CD8-positive, alpha-beta T cell (primary cell): ENCODE measurements at regions of chr5 and their contacts with region 1.

Region 1: GRCh38 chr5:50744776-50745175 is 78.3 kb downstream of the PARP8 start:
- DNase-seq: peak in 2 of 9 experiments; percentile 36 to 61
- ATAC-seq: peak; percentile 65
- H3K4me3 ChIP-seq: peak overlapping the region; percentile 31 to 44
- H3K4me3 Mint-ChIP-seq: peak overlapping the region; percentile 81
- H3K27ac ChIP-seq: peak overlapping the region; percentile 17 to 71
- H3K27ac Mint-ChIP-seq: peak overlapping the region; percentile 91
- H3K4me1 ChIP-seq: peaks cover 61% of the 10 kb centered on the region
- H3K4me1 Mint-ChIP-seq: peaks cover 76% of the 10 kb centered on the region
- H3K27me3 ChIP-seq: no peaks in the 10 kb centered on the region
- H3K27me3 Mint-ChIP-seq: no peaks in the 10 kb centered on the region
- CTCF ChIP-seq: no peak

Region 2: GRCh38 chr5:50325237-50325832 is 419.4 kb before region 1 on chr5:
- CTCF ChIA-PET with region 1: no interaction called
- POLR2A ChIA-PET with region 1: no interaction called
- intact Hi-C with region 1: loop called in 1 of 2 experiments (anchors 5 kb)
- DNase-seq: peak in 3 of 9 experiments; percentile 17 to 55 (median 46)
- ATAC-seq: no peak
- H3K4me3 ChIP-seq: no peak overlapping the region
- H3K4me3 Mint-ChIP-seq: no peak overlapping the region
- H3K27ac ChIP-seq: no peak overlapping the region
- H3K27ac Mint-ChIP-seq: no peak overlapping the region
- H3K4me1 ChIP-seq: no peaks in the 10 kb centered on the region
- H3K4me1 Mint-ChIP-seq: peaks cover 18% of the 10 kb centered on the region
- H3K27me3 ChIP-seq: no peaks in the 10 kb centered on the region
- H3K27me3 Mint-ChIP-seq: no peaks in the 10 kb centered on the region
- CTCF ChIP-seq: peak; percentile 94

Region 3: DNA sequence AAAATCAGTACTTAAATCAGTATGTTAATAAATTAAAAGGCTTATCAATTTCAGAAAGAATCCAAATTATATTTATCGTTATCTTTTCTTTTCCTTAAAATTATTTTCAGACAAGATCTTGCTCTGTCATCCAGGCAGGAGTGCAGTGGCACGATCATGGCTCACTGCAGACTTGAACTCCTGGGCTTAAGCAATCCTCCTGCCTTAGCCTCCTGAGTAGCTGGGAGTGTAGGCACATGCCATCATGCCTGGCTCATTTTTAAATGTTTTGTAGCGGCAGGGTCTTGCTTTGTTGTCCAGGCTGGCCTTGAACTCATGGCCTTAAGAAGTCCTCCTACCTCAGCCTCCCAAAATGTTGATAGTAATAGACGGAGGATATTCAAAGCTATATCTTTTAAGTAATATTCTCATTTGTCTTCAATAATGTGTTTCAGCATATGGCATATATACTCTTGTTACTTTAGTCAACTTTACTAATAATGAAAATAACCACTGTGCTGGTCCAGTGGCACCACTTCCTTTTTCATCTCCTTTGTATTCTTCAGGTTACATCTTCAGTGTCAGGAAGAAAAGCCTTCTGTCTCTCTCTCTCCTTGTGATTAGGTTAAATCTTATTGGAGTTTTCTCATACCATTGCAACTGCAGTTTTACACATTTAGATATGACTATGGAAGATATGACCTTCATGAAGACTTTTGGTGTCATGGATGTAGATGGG is 47.2 kb before region 1 on chr5:
- CTCF ChIA-PET with region 1: no interaction called
- POLR2A ChIA-PET with region 1: interaction called, 3 read pairs
- intact Hi-C with region 1: loop called in 1 of 2 experiments (anchors 10 kb)
- DNase-seq: no peak
- ATAC-seq: no peak
- H3K4me3 ChIP-seq: no peak overlapping the region
- H3K4me3 Mint-ChIP-seq: no peak overlapping the region
- H3K27ac ChIP-seq: no peak overlapping the region
- H3K27ac Mint-ChIP-seq: peak overlapping the region; percentile 29
- H3K4me1 ChIP-seq: peaks cover 25% of the 10 kb centered on the region
- H3K4me1 Mint-ChIP-seq: peaks cover 72% of the 10 kb centered on the region
- H3K27me3 ChIP-seq: no peaks in the 10 kb centered on the region
- H3K27me3 Mint-ChIP-seq: no peaks in the 10 kb centered on the region
- CTCF ChIP-seq: no peak

Region 4: DNA sequence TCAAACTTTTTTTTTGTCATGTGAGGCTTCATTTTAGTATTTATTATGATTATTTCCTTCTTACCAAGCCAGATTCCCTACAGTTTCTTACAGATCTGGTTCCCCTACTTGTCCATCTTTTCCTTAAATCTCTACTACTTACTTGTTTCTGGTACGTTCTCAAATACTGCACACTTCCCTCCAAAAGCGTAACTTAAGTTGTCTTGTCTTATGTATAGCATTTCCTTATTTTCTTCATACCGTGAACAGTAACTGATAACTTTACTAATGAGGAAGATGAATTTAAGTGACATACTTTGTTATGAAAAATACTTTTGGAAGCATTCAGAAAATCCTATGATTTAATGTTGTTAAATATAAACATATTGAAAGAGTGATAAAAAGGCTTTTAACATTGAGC is 11.0 kb before region 1 on chr5:
- CTCF ChIA-PET with region 1: interaction called, 3 read pairs
- POLR2A ChIA-PET with region 1: interaction called, 3 read pairs
- intact Hi-C with region 1: loop called in 1 of 2 experiments (anchors 1 kb)
- DNase-seq: no peak
- ATAC-seq: no peak
- H3K4me3 ChIP-seq: no peak overlapping the region
- H3K4me3 Mint-ChIP-seq: no peak overlapping the region
- H3K27ac ChIP-seq: no peak overlapping the region
- H3K27ac Mint-ChIP-seq: no peak overlapping the region
- H3K4me1 ChIP-seq: peaks cover 30% of the 10 kb centered on the region
- H3K4me1 Mint-ChIP-seq: peaks cover 67% of the 10 kb centered on the region
- H3K27me3 ChIP-seq: no peaks in the 10 kb centered on the region
- H3K27me3 Mint-ChIP-seq: no peaks in the 10 kb centered on the region
- CTCF ChIP-seq: no peak

Region 5: DNA sequence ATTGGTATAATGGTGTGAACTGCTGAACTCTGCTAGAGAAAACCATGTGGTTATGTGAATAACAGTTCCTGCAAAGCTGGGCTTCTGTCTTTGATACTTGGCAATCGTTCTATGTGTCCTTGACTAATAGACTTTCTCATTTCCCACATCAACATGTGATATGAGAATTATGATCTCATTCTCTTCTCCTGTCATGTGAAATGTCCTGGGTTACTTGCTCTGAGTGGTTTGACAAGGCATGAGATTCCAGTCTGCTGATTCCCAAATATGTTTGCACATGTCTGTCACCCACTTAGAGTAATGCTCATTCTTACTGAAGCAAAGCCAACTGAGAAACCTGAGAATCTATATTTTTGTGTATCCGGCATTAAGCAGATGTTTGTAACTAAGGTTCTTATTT is 62.9 kb after region 1 on chr5:
- CTCF ChIA-PET with region 1: no interaction called
- POLR2A ChIA-PET with region 1: no interaction called
- intact Hi-C with region 1: no loop called
- DNase-seq: no peak
- ATAC-seq: no peak
- H3K4me3 ChIP-seq: no peak overlapping the region
- H3K4me3 Mint-ChIP-seq: no peak overlapping the region
- H3K27ac ChIP-seq: no peak overlapping the region
- H3K27ac Mint-ChIP-seq: peak overlapping the region; percentile 12
- H3K4me1 ChIP-seq: no peaks in the 10 kb centered on the region
- H3K4me1 Mint-ChIP-seq: peaks cover 53% of the 10 kb centered on the region
- H3K27me3 ChIP-seq: no peaks in the 10 kb centered on the region
- H3K27me3 Mint-ChIP-seq: no peaks in the 10 kb centered on the region
- CTCF ChIP-seq: no peak